Natural killer cell (primary cell): ENCODE measurements at regions of chr5 and their contacts with region 1.

Region 1: GRCh38 chr5:1105350-1106265 is 6.3 kb downstream of the SLC12A7 start:
- DNase-seq: peak; percentile 57 to 83
- ATAC-seq: peak; percentile 66 to 79 (median 76)
- H3K4me3 ChIP-seq: peak overlapping the region; percentile 36
- H3K4me3 Mint-ChIP-seq: peak overlapping the region; percentile 78
- H3K27ac ChIP-seq: peak overlapping the region; percentile 96
- H3K27ac Mint-ChIP-seq: peak overlapping the region; percentile 85 to 99
- H3K4me1 ChIP-seq: peaks cover 70% of the 10 kb centered on the region
- H3K4me1 Mint-ChIP-seq: peaks cover 42 to 91% of the 10 kb centered on the region in 2 donors
- H3K27me3 ChIP-seq: no peaks in the 10 kb centered on the region
- H3K27me3 Mint-ChIP-seq: no peaks in the 10 kb centered on the region
- CTCF ChIP-seq: no peak

Region 2: DNA sequence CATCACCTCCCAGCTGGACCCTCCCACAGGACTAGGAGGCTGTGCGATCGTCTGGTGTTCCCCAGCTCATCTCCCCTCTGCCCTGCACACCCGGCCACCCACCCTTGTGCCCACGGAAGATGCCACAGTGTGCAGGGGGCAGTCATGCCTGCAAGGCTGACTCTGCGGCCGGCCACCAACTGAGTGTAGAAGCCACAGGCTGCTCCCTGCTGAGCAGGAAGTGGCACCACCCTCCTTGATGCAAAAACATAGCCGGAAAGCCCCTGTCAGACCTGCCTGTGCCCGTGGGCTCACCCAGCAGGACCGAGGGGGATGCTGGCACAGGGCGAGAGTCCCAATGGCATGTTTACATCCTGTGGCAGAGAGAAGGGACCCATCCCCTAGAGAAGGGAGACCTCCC is 46.5 kb after region 1 on chr5:
- intact Hi-C with region 1: loop called (anchors 5 kb)
- DNase-seq: peak; percentile 42 to 47
- ATAC-seq: peak; percentile 67 to 80 (median 70)
- H3K4me3 ChIP-seq: no peak overlapping the region
- H3K4me3 Mint-ChIP-seq: peak overlapping the region; percentile 73
- H3K27ac ChIP-seq: peak overlapping the region; percentile 73
- H3K27ac Mint-ChIP-seq: peak overlapping the region; percentile 3 to 25
- H3K4me1 ChIP-seq: peaks cover 59% of the 10 kb centered on the region
- H3K4me1 Mint-ChIP-seq: peaks cover 31 to 37% of the 10 kb centered on the region in 2 donors
- H3K27me3 ChIP-seq: peaks cover 5% of the 10 kb centered on the region
- H3K27me3 Mint-ChIP-seq: peaks cover 0 to 9% of the 10 kb centered on the region in 2 donors
- CTCF ChIP-seq: no peak

Region 3: DNA sequence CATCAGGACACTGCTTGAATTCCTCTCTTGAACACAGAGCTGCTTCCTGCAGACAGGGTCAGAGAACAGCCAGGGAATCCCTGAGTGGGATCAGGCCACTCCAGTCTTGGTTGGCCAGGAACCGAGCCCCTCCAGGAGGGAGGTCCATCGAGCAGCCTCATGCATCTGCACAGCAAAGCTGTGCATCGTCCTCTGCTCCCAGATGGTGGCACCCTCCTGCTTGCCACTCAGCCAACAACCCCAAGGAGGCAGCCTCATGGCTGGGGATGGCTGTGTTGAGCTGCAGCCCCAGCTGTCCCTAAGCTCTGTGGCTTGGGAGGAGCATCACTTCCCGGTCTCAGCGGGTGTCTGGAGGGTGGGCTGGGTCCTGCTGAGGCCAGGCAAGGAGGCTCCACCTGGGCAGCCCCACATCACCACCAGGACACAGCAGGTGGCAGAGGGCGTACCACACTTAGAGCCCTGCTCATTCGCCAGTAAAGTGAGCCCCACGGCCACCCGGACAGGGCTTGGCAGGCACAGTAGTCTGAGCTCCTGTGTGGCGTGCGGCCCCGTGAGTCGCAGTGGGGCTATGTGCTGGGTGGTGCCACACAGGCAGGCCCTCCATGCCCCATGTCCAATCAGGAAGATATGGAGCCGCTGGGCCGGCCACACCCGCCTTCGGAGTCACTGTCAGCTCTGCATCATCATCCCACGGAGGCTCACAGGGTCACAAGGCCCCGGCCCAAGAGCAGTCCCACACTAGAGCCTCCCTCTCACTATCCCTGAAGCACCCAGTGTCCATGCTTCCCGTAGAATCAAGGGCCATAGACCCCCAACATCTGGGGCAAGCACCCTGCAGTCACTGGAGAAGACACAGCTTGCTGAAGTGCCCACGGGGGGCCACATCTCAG is 406.3 kb after region 1 on chr5:
- intact Hi-C with region 1: loop called (anchors 10 kb)
- DNase-seq: peak in 1 of 2 donors; percentile 14
- ATAC-seq: peak in 1 of 3 donors; percentile 23
- H3K4me3 ChIP-seq: no peak overlapping the region
- H3K4me3 Mint-ChIP-seq: no peak overlapping the region
- H3K27ac ChIP-seq: no peak overlapping the region
- H3K27ac Mint-ChIP-seq: peak overlapping the region; percentile 95 to 96
- H3K4me1 ChIP-seq: peaks cover 90% of the 10 kb centered on the region
- H3K4me1 Mint-ChIP-seq: peaks cover 77 to 88% of the 10 kb centered on the region in 2 donors
- H3K27me3 ChIP-seq: no peaks in the 10 kb centered on the region
- H3K27me3 Mint-ChIP-seq: no peaks in the 10 kb centered on the region
- CTCF ChIP-seq: no peak